Dorsolateral prefrontal cortex (tissue), 120 donors: ENCODE measurements at regions of chr12 and their contacts with region 1.

Region 1: DNA sequence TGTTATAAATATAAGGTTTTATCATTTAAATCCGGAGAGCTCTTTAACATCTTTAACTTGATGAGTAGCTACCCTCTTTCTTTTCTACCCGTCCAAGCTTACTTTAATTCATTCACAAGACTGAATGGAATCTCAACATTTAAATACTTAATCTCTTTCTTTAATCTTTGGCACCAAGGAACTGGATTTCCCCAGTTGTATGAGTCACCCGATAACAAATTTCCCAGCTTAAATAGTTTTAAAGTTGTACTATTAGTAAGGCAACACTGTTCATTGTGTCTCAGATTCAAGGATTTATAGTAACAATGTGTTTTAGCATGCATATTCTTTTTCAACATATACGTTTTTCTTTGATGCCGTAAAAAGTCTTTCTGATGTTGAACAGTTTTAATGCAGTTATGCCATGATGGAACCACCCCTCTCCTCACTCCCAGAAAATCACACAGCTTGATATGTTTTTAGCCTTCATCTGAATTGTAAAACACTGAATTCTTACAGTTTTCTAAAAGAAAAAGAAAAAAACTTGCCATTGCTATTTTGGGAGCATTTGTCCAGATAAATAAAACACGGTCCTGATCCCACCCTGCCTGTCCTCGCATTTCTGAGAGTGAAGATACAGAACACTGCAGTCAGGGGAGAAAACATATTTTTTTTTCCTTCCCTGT is 16.0 kb upstream of the LRP6 start:
- DNase-seq: no peak
- H3K4me3 ChIP-seq: no peak overlapping the region
- H3K27ac ChIP-seq: no peak overlapping the region
- H3K27me3 ChIP-seq: no peaks in the 10 kb centered on the region
- CTCF ChIP-seq: no peak

Region 2: DNA sequence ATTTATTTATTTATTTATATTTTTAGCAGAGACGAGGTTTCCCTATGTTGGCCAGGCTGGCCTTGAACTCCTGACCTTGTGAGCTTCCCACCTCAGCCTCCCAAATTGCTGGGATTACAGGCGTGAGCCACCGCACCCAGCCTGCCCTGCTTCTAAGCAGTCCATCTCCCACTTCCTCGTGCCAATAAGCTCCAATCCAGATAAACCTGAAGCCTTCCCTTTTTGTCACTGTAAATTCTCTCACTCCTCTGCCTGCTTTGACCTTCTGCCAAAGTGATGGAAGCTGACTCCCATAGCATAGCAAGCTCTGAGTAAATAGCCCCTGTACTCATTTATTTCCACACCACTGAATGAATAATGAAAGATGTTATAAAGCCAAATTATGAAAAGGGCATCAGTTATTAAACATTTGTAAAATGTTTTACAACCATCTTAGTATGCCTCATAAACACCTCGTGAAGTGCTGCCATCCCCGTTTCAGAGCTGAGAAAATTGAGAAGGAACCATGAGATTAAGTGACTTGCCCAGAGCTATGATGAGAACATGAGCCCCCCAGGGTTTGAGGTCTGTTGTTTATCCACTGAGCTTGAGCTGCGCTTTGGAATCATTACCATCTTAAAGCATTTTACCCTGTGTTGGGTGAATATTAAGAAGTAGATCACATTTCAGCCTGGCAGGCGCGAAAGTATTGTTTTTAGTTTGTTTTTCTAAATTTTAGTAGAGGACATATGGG is 36.7 kb after region 1 on chr12:
- intact Hi-C with region 1: loop called in 1 of 2 experiments (anchors 5 kb)
- DNase-seq: no peak
- H3K4me3 ChIP-seq: peak overlapping the region in 30 of 59 donors; percentile 0 to 48 (median 17)
- H3K27ac ChIP-seq: peak overlapping the region in 39 of 59 donors; percentile 4 to 81 (median 39)
- H3K27me3 ChIP-seq: no peaks in the 10 kb centered on the region
- CTCF ChIP-seq: no peak